WTC11 (cell line): ENCODE measurements at regions of chr6 and their contacts with region 1.

Region 1: GRCh38 chr6:26183581-26184366 is 96.5 kb downstream of the HFE start:
- DNase-seq: peak; percentile 74
- ATAC-seq: peak; percentile 78
- H3K4me3 Mint-ChIP-seq: peak overlapping the region; percentile 90
- H3K27ac Mint-ChIP-seq: peak overlapping the region; percentile 99
- H3K4me1 Mint-ChIP-seq: peaks cover 45% of the 10 kb centered on the region
- H3K27me3 Mint-ChIP-seq: no peaks in the 10 kb centered on the region
- CTCF ChIP-seq: no peak

Region 2: DNA sequence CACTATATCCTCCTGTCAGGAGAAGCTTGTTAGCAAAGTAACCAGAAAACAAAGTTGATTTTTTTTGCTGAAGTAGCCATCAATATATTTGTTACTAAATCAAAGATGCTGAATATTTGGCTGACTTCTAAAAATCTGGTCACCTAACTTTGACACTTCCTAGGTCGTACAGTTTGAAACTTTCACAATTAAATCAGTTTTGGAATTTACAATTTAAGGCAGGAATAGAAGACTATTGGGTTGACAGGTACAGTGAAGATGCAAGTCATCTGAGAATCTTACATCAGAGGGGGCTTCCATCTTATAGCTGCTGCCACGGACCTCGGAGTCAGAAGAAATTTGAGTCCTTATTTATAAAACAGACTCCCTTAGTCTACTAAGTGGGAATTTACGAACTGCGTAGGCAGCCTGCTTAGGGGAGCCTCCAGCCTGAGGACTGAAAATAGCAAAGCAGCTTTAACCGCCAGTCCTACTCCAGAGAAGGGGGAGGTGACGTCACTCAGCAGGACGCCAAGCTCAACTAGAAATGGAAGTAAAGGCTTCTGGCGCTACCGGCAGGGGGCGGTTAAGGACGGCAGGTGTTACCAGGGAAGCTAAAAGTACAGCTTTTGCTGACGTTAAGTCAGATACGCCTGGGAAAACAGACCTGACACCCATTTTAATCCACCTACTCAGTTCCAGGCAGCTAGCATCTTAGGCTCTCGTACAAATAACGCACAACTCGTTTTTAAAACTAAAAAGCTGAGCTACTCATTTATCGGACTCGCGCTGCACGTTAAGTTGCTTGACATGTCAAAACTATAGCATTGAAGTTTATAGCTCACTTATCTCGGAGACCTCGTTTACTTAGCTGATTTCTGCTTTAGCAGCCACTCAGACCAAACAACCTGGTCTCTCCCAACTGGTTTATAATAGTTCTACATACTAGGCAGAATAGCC is 157.6 kb before region 1 on chr6:
- CTCF ChIA-PET with region 1: no interaction called
- POLR2A ChIA-PET with region 1: interaction called, 35 read pairs
- DNase-seq: peak; percentile 95
- ATAC-seq: peak; percentile 12
- H3K4me3 Mint-ChIP-seq: peak overlapping the region; percentile 92
- H3K27ac Mint-ChIP-seq: peak overlapping the region; percentile 98
- H3K4me1 Mint-ChIP-seq: peaks cover 73% of the 10 kb centered on the region
- H3K27me3 Mint-ChIP-seq: no peaks in the 10 kb centered on the region
- CTCF ChIP-seq: peak; percentile 60

Region 3: GRCh38 chr6:26103770-26104456 is 79.9 kb before region 1 on chr6:
- CTCF ChIA-PET with region 1: no interaction called
- POLR2A ChIA-PET with region 1: interaction called, 27 read pairs
- DNase-seq: peak; percentile 73
- ATAC-seq: peak; percentile 79
- H3K4me3 Mint-ChIP-seq: peak overlapping the region; percentile 84
- H3K27ac Mint-ChIP-seq: peak overlapping the region; percentile 98
- H3K4me1 Mint-ChIP-seq: peaks cover 23% of the 10 kb centered on the region
- H3K27me3 Mint-ChIP-seq: no peaks in the 10 kb centered on the region
- CTCF ChIP-seq: no peak

Region 4: DNA sequence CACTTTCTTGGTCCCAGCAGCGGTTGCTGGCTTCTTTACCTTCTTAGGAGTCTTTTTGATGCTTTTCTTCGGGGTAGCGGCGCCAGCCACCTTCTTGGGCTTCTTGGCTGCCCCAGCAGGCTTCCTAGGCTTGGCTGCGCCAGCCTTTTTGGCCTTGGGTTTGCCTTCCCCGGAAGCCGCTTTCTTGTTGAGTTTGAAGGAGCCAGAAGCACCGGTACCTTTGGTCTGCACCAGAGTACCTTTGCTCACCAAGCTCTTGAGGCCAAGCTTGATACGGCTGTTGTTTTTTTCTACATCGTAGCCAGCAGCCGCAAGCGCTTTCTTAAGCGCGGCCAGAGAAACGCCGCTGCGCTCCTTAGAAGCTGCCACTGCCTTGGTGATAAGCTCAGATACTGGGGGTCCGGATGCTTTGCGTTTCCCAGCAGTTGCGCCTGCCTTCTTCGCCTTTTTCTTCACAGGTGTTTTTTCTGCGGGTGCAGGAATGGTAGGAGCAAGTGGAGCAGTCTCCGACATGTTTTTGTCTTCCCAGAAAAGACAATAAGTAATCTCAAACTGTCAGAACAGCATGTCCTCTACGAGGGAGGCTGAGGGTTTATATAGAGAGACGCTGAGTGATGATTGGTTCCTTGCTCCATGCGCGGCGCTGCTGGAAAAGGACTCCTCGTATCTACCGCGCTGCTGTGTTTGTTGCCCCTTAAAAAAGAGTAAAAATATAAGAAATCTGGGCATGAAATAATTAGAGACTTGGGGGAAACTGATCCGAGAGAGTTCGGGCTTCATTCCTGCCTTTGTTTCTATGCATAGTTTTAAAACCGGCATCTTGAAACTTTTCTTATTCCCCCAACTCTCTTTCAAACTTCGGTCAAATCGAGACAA is 50.9 kb after region 1 on chr6:
- CTCF ChIA-PET with region 1: no interaction called
- POLR2A ChIA-PET with region 1: interaction called, 35 read pairs
- DNase-seq: no peak
- ATAC-seq: peak; percentile 70
- H3K4me3 Mint-ChIP-seq: peak overlapping the region; percentile 94
- H3K27ac Mint-ChIP-seq: peak overlapping the region; percentile 99
- H3K4me1 Mint-ChIP-seq: peaks cover 33% of the 10 kb centered on the region
- H3K27me3 Mint-ChIP-seq: no peaks in the 10 kb centered on the region
- CTCF ChIP-seq: no peak

Region 5: DNA sequence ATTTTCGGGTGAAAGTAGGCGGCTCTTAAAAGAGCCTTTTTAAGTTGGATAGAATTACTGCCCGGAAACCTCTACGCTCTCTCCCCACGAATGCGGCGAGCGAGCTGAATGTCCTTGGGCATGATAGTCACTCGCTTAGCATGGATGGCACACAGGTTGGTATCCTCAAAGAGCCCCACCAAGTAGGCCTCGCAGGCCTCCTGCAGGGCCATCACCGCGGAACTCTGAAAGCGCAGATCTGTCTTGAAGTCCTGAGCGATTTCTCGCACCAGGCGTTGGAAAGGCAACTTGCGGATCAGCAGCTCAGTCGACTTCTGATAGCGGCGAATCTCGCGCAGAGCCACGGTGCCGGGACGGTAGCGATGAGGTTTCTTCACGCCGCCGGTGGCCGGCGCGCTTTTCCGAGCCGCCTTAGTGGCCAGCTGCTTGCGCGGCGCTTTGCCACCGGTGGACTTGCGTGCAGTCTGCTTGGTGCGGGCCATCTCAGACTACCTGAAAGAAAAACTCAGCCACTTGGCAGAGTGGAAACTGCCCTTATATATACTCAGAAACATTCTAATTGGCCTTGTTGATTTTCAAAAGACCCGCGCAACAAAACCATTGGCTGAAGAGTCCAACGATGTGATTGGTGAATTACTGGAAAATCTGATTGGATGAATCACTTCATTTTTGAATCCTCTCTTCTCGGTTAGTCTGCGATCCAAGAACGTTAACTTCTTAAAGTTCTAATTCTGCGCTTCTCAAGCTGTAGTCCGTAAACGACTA is 87.3 kb after region 1 on chr6:
- CTCF ChIA-PET with region 1: no interaction called
- POLR2A ChIA-PET with region 1: interaction called, 92 read pairs
- DNase-seq: peak; percentile 65
- ATAC-seq: peak; percentile 28
- H3K4me3 Mint-ChIP-seq: no peak overlapping the region
- H3K27ac Mint-ChIP-seq: no peak overlapping the region
- H3K4me1 Mint-ChIP-seq: peaks cover 35% of the 10 kb centered on the region
- H3K27me3 Mint-ChIP-seq: no peaks in the 10 kb centered on the region
- CTCF ChIP-seq: no peak

Region 6: GRCh38 chr6:27146706-27147505 is 963.1 kb after region 1 on chr6:
- CTCF ChIA-PET with region 1: no interaction called
- POLR2A ChIA-PET with region 1: interaction called, 13 read pairs
- DNase-seq: peak; percentile 80
- ATAC-seq: peak; percentile 67
- H3K4me3 Mint-ChIP-seq: no peak overlapping the region
- H3K27ac Mint-ChIP-seq: no peak overlapping the region
- H3K4me1 Mint-ChIP-seq: peaks cover 23% of the 10 kb centered on the region
- H3K27me3 Mint-ChIP-seq: no peaks in the 10 kb centered on the region
- CTCF ChIP-seq: no peak

Region 7: GRCh38 chr6:27871924-27872638 is 1688.3 kb after region 1 on chr6:
- CTCF ChIA-PET with region 1: no interaction called
- POLR2A ChIA-PET with region 1: interaction called, 15 read pairs
- DNase-seq: peak; percentile 79
- ATAC-seq: peak; percentile 58
- H3K4me3 Mint-ChIP-seq: peak overlapping the region; percentile 94
- H3K27ac Mint-ChIP-seq: peak overlapping the region; percentile 99
- H3K4me1 Mint-ChIP-seq: peaks cover 50% of the 10 kb centered on the region
- H3K27me3 Mint-ChIP-seq: no peaks in the 10 kb centered on the region
- CTCF ChIP-seq: no peak